Left ventricle myocardium inferior (tissue), 1 donor: ENCODE measurements at regions of chr6 and their contacts with region 1.

Region 1: DNA sequence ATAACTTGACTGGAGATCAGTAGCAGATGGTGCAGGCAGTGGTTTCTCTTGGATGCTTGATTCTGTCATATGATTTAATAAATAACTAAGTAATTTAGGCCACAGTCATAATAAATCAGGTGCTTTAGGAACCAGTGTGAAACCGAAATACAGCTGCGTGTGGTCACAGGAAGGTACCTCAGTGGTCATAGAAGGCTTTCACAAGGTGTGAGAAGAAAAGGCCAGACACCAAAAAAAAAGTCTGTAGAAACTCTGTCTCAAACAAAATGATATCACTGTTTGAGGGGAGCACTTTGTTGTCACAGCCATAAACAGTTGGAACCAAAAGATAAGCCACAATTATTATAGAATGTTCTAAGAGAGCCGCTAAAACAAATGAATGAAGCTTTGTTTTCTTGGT is 56.5 kb downstream of the ARMC2 start:
- DNase-seq: no peak
- H3K4me3 ChIP-seq: no peak overlapping the region
- H3K27ac ChIP-seq: peak overlapping the region; percentile 69
- H3K4me1 ChIP-seq: peaks cover 35% of the 10 kb centered on the region
- H3K27me3 ChIP-seq: no peaks in the 10 kb centered on the region
- CTCF ChIP-seq: no peak

Region 2: DNA sequence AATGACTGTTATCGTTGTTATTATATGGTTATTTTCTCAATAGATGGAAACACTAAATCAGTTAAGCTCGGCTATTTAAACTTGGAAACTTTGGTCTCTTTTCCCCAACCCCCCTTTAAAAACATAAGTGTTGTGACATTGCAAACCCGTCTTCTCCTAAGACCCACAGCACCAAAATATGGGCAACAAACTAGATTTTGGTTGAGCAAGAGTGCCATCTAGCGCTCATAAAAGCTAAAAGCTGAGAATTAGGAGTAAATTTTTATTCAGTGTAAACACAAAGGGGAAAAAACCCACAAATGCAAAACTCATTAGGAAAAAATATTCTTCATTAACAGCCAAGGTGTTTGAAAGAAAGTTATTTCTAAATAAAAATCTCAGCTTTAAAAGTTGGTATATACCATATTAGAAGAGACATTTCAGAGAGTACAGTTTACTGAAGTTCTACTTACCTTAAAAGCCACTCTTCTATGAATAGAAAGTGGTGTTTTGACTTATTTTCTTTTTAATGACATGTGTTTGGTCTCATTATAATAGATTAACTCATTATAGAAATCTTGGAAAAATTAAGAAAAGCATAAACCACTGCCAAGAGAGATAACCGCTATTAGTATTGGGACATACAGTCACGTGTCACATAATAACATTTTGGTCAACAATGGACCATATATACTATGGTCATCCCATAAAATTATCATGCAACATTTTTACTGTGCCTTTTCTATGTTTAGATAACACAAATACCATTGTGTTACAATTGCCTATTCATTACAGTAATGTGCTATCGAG is 168.8 kb after region 1 on chr6:
- intact Hi-C with region 1: loop called (anchors 5 kb)
- DNase-seq: no peak
- H3K4me3 ChIP-seq: no peak overlapping the region
- H3K27ac ChIP-seq: peak overlapping the region; percentile 47
- H3K4me1 ChIP-seq: peaks cover 86% of the 10 kb centered on the region
- H3K27me3 ChIP-seq: no peaks in the 10 kb centered on the region
- CTCF ChIP-seq: peak; percentile 73